HCT116 (cell line): ENCODE measurements at regions of chr14 and their contacts with region 1.

Region 1: GRCh38 chr14:94129111-94129757 is at the start of gene IFI27L2:
- DNase-seq: peak; percentile 59
- ATAC-seq: peak; percentile 93
- H3K4me3 ChIP-seq: peak within 1 kb of the TSS; percentile 69 to 82
- H3K27ac ChIP-seq: peak within 1 kb of the TSS; percentile 40
- H3K4me1 ChIP-seq: peaks cover 6 to 22% of the 10 kb centered on the region in 2 experiments; a peak in 3 of 4 replicates
- H3K27me3 ChIP-seq: no peaks in the 10 kb centered on the region
- CTCF ChIP-seq: peak in 2 of 3 experiments; percentile 16 to 23; a peak in 1 of 6 replicates
- POLR2A ChIP-seq: no peak
- RAD21 ChIP-seq: no peak
- total RNA-seq, gene IFI27L2: 42.9 TPM

Region 2: DNA sequence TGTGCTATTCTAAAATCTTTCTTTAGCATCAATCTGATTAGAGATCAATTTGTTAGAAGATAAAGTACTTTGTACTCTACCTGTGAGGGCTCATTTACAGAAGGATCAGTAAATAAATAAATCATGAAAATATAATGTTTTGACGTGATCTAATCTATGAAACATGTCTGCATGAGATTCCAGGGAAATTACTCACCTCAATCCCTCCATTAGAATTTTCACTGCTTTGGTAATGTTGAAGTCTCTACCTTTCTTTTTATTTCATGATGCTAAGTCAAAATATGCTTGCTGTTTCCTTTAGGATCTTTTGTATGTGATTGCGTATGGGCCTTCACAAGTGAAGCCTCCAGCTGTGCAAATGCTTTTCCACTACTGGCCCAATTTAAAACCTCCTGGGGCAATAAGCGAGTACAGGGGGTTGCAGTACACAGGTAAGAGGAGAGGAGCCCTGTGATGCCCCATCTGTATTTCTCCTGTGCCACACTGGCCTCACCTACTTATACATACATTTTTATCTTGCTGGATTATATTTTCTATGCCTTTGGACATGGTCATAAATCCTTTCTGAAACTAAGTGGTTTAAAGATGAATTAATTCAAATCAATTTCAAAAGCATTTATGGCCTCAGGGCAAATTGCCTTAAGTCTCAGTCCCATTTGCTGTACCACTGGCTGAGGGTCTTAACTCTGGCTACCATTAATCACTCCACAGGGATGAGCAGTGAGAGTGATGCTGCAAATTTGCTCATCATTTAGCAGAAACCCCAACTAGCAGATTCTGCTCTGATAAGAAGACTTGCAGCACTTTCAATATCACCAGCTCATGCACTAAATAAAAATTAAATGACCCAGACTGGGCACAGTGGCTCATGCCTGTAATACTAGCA is 632.1 kb before region 1 on chr14:
- CTCF ChIA-PET with region 1: no interaction called
- POLR2A ChIA-PET with region 1: no interaction called
- RAD21 ChIA-PET with region 1: no interaction called
- intact Hi-C with region 1: no loop called
- DNase-seq: no peak
- ATAC-seq: no peak
- H3K4me3 ChIP-seq: no peak overlapping the region
- H3K27ac ChIP-seq: no peak overlapping the region
- H3K4me1 ChIP-seq: no peaks in the 10 kb centered on the region
- H3K27me3 ChIP-seq: no peaks in the 10 kb centered on the region
- CTCF ChIP-seq: no peak
- POLR2A ChIP-seq: no peak
- RAD21 ChIP-seq: no peak

Region 3: DNA sequence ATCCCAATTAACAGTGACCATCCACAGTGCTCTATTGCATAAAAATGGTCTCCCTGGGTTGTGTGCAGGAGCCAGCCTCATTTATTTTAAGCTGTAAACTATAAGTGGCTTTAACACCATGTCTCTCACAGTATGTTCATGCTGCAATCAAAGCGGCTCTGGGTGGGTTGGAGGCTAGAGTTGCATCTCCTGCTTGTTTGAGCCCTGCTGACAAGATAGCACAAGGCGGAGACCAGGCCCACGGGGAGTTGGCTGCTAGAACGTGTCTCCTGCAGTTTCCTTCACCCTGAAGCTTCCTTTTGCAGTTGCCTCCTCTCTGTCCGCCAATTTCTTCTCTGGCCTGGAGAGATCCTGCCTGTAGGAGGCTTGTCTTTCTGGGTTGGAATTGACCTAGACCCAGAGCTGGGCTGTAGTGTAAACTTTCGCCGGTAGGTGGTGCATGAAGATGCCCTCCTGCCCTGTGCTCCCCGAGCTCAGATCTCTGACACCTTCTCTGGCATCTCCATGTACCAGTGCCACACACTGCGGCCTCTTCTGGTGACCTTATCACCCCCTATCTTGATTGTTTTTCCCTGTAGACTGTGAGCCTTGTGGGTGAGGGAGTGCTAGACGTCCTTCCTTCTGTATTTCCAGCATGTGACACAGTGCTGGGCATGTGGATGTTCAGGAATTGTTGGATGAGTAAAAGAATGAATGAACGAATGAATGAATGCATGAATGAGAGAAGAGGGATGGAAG is 92.8 kb before region 1 on chr14:
- CTCF ChIA-PET with region 1: interaction called, 10 read pairs
- POLR2A ChIA-PET with region 1: no interaction called
- RAD21 ChIA-PET with region 1: interaction called in 1 of 2 experiments, 4 read pairs
- intact Hi-C with region 1: no loop called
- DNase-seq: peak; percentile 64
- ATAC-seq: peak; percentile 99
- H3K4me3 ChIP-seq: no peak overlapping the region
- H3K27ac ChIP-seq: no peak overlapping the region
- H3K4me1 ChIP-seq: peaks cover 3 to 16% of the 10 kb centered on the region in 2 experiments; a peak in 3 of 4 replicates
- H3K27me3 ChIP-seq: no peaks in the 10 kb centered on the region
- CTCF ChIP-seq: peak; percentile 88 to 90 (median 90)
- POLR2A ChIP-seq: no peak
- RAD21 ChIP-seq: peak; percentile 72

Region 4: DNA sequence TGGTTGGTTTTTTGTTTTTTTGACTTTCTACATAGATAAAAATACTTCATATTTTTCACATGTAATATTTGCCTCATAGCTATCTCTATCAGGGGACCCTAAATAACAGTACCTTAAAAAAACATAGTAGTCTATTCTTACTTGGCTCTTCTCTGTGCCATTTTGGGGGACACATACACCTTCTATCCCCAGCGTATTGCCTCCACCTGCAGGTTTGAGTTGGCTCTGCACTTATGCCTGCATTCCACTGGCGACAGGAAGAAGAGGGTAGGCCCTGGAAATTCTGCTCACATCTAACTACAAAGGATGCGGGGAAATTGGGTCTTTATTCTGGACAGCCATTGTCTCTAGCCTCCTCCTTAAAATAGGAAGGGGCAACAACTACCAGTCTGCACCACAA is 14.0 kb after region 1 on chr14:
- CTCF ChIA-PET with region 1: interaction called, 37 read pairs
- POLR2A ChIA-PET with region 1: interaction called, 3 read pairs
- RAD21 ChIA-PET with region 1: interaction called in 1 of 2 experiments, 5 read pairs
- intact Hi-C with region 1: no loop called
- DNase-seq: peak; percentile 29
- ATAC-seq: peak; percentile 92
- H3K4me3 ChIP-seq: no peak overlapping the region
- H3K27ac ChIP-seq: no peak overlapping the region
- H3K4me1 ChIP-seq: peaks cover 3 to 10% of the 10 kb centered on the region in 2 experiments; a peak in 3 of 4 replicates
- H3K27me3 ChIP-seq: no peaks in the 10 kb centered on the region
- CTCF ChIP-seq: peak; percentile 44 to 76 (median 67); a peak in 5 of 6 replicates
- POLR2A ChIP-seq: no peak
- RAD21 ChIP-seq: peak; percentile 64

Region 5: GRCh38 chr14:94412671-94413638 is 283.7 kb after region 1 on chr14:
- CTCF ChIA-PET with region 1: interaction called, 6 read pairs
- POLR2A ChIA-PET with region 1: no interaction called
- RAD21 ChIA-PET with region 1: no interaction called
- intact Hi-C with region 1: loop called (anchors 1 kb)
- DNase-seq: no peak
- ATAC-seq: peak; percentile 87
- H3K4me3 ChIP-seq: no peak overlapping the region
- H3K27ac ChIP-seq: no peak overlapping the region
- H3K4me1 ChIP-seq: no peaks in the 10 kb centered on the region
- H3K27me3 ChIP-seq: no peaks in the 10 kb centered on the region
- CTCF ChIP-seq: peak; percentile 70 to 71 (median 71); a peak in 5 of 6 replicates
- POLR2A ChIP-seq: no peak
- RAD21 ChIP-seq: peak; percentile 87